Naive thymus-derived CD4-positive, alpha-beta T cell (primary cell): ENCODE measurements at regions of chr3 and their contacts with region 1.

Region 1: DNA sequence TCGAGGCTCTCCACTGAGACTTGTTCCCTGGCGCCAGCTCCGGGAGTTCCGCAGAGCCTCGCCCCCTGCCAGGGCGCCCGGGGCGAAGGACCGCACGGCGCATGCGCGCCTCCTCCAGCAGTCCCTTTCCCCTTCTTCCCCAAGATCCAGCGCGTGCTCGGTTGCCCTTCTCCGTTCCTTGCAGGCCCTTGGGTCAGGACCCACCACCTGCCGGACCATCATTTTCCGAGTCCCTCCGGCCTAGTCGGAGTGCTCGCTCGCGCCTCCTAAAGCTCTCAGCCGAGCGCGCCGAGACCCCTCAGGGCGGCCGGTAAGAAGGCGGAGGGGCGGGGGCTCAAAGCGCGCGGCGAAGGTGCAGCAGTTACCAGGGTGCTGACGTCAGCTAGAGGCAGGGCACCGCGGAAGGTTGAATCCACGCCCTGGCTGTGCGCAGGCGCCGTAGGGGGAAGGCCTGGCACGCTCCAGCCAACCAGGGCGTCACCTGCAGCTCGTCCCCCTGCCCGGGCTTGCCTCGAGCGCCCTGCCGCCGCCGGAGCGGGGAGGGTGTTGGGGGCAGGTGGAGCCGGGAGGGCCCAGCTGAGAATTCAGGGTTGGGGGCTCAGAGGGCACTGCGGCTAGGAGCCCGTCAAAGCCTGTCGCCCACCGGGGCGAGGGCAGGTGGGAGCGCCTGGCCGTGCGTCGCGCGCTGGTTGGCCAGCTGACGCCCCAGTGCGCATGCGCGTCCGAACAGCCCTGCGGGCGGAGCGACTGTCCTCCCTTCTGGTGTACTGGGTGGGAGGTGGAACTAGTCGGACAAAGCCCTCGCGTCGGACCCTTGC is at the start of gene TCAIM:
- DNase-seq: peak; percentile 97 to 100 (median 100)
- ATAC-seq: peak; percentile 97
- H3K4me3 ChIP-seq: peak within 1 kb of the TSS; percentile 91
- H3K4me3 Mint-ChIP-seq: peak within 1 kb of the TSS; percentile 92 to 99 (median 96)
- H3K27ac ChIP-seq: peak within 1 kb of the TSS; percentile 89
- H3K27ac Mint-ChIP-seq: peak within 1 kb of the TSS; percentile 87 to 99 (median 97)
- H3K4me1 ChIP-seq: peaks cover 14 to 16% of the 10 kb centered on the region in 2 donors
- H3K4me1 Mint-ChIP-seq: peaks cover 12 to 45% (median 34%) of the 10 kb centered on the region in 7 donors
- H3K27me3 ChIP-seq: no peaks in the 10 kb centered on the region
- H3K27me3 Mint-ChIP-seq: peaks cover 5 to 14% (median 7%) of the 10 kb centered on the region in 5 donors
- total RNA-seq, gene TCAIM: 7.7 to 19.8 (median 16.1) TPM

Region 2: GRCh38 chr3:42600111-42600988 is 1737.9 kb before region 1 on chr3 and contains the start of gene NKTR:
- CTCF ChIA-PET with region 1: no interaction called
- POLR2A ChIA-PET with region 1: no interaction called
- intact Hi-C with region 1: loop called in 1 of 2 experiments (anchors 10 kb)
- DNase-seq: peak; percentile 98 to 100 (median 100)
- ATAC-seq: peak; percentile 97
- H3K4me3 ChIP-seq: peak within 1 kb of the TSS; percentile 75
- H3K4me3 Mint-ChIP-seq: peak within 1 kb of the TSS; percentile 91 to 98 (median 95)
- H3K27ac ChIP-seq: peak within 1 kb of the TSS; percentile 93
- H3K27ac Mint-ChIP-seq: peak within 1 kb of the TSS; percentile 95 to 99 (median 98)
- H3K4me1 ChIP-seq: peaks cover 11 to 25% of the 10 kb centered on the region in 2 donors
- H3K4me1 Mint-ChIP-seq: peaks cover 26 to 53% (median 43%) of the 10 kb centered on the region in 7 donors
- H3K27me3 ChIP-seq: no peaks in the 10 kb centered on the region
- H3K27me3 Mint-ChIP-seq: peaks cover 0 to 2% (median 0%) of the 10 kb centered on the region in 5 donors
- total RNA-seq, gene NKTR: 110 to 275 (median 238) TPM

Region 3: GRCh38 chr3:43690400-43691119 is 647.7 kb before region 1 on chr3 and contains the start of gene ABHD5:
- CTCF ChIA-PET with region 1: no interaction called
- POLR2A ChIA-PET with region 1: no interaction called
- intact Hi-C with region 1: loop called (anchors 2 to 5 kb)
- DNase-seq: peak; percentile 94 to 99 (median 96)
- ATAC-seq: peak; percentile 96
- H3K4me3 ChIP-seq: peak within 1 kb of the TSS; percentile 74
- H3K4me3 Mint-ChIP-seq: peak within 1 kb of the TSS; percentile 91 to 98 (median 94)
- H3K27ac ChIP-seq: peak within 1 kb of the TSS; percentile 85
- H3K27ac Mint-ChIP-seq: peak within 1 kb of the TSS; percentile 90 to 97 (median 92)
- H3K4me1 ChIP-seq: peaks cover 8% of the 10 kb centered on the region in 2 donors
- H3K4me1 Mint-ChIP-seq: peaks cover 11 to 47% (median 37%) of the 10 kb centered on the region in 7 donors
- H3K27me3 ChIP-seq: no peaks in the 10 kb centered on the region
- H3K27me3 Mint-ChIP-seq: peaks cover 0 to 6% (median 0%) of the 10 kb centered on the region in 5 donors
- total RNA-seq, gene ABHD5: 6.1 to 21.0 (median 12.1) TPM

Region 4: GRCh38 chr3:44477312-44478030 is 139.3 kb after region 1 on chr3 and contains the start of gene ZNF445:
- CTCF ChIA-PET with region 1: no interaction called
- POLR2A ChIA-PET with region 1: interaction called, 5 read pairs
- intact Hi-C with region 1: loop called (anchors 1 kb)
- DNase-seq: peak; percentile 66 to 85 (median 79)
- ATAC-seq: peak; percentile 96
- H3K4me3 ChIP-seq: peak within 1 kb of the TSS; percentile 91
- H3K4me3 Mint-ChIP-seq: peak within 1 kb of the TSS; percentile 85 to 98 (median 92)
- H3K27ac ChIP-seq: peak within 1 kb of the TSS; percentile 70
- H3K27ac Mint-ChIP-seq: peak within 1 kb of the TSS; percentile 79 to 95 (median 87)
- H3K4me1 ChIP-seq: peaks cover 4 to 18% of the 10 kb centered on the region in 2 donors
- H3K4me1 Mint-ChIP-seq: peaks cover 16 to 51% (median 40%) of the 10 kb centered on the region in 7 donors
- H3K27me3 ChIP-seq: no peaks in the 10 kb centered on the region
- H3K27me3 Mint-ChIP-seq: no peaks in the 10 kb centered on the region
- total RNA-seq, gene ZNF445: 16.8 to 37.6 (median 24.4) TPM

Region 5: GRCh38 chr3:44624749-44625480 is 286.7 kb after region 1 on chr3 and contains the start of gene ZNF197:
- CTCF ChIA-PET with region 1: no interaction called
- POLR2A ChIA-PET with region 1: interaction called, 3 read pairs
- intact Hi-C with region 1: loop called in 1 of 2 experiments (anchors 5 kb)
- DNase-seq: peak; percentile 5 to 64 (median 27)
- ATAC-seq: peak; percentile 80
- H3K4me3 ChIP-seq: peak within 1 kb of the TSS; percentile 51
- H3K4me3 Mint-ChIP-seq: peak within 1 kb of the TSS; percentile 83 to 94 (median 92)
- H3K27ac ChIP-seq: peak within 1 kb of the TSS; percentile 66
- H3K27ac Mint-ChIP-seq: peak within 1 kb of the TSS; percentile 60 to 88 (median 81)
- H3K4me1 ChIP-seq: peaks cover 9 to 10% of the 10 kb centered on the region in 2 donors
- H3K4me1 Mint-ChIP-seq: peaks cover 18 to 53% (median 47%) of the 10 kb centered on the region in 7 donors
- H3K27me3 ChIP-seq: no peaks in the 10 kb centered on the region
- H3K27me3 Mint-ChIP-seq: no peaks in the 10 kb centered on the region
- total RNA-seq, gene ZNF197: 5.5 to 15.6 (median 15.0) TPM

Region 6: GRCh38 chr3:44642337-44642736 is 304.1 kb after region 1 on chr3:
- CTCF ChIA-PET with region 1: no interaction called
- POLR2A ChIA-PET with region 1: no interaction called
- intact Hi-C with region 1: no loop called
- DNase-seq: no peak
- ATAC-seq: no peak
- H3K4me3 ChIP-seq: peak overlapping the region; percentile 2
- H3K4me3 Mint-ChIP-seq: no peak overlapping the region
- H3K27ac ChIP-seq: no peak overlapping the region
- H3K27ac Mint-ChIP-seq: no peak overlapping the region
- H3K4me1 ChIP-seq: no peaks in the 10 kb centered on the region
- H3K4me1 Mint-ChIP-seq: peaks cover 0 to 14% (median 4%) of the 10 kb centered on the region in 7 donors
- H3K27me3 ChIP-seq: no peaks in the 10 kb centered on the region
- H3K27me3 Mint-ChIP-seq: no peaks in the 10 kb centered on the region

Region 7: DNA sequence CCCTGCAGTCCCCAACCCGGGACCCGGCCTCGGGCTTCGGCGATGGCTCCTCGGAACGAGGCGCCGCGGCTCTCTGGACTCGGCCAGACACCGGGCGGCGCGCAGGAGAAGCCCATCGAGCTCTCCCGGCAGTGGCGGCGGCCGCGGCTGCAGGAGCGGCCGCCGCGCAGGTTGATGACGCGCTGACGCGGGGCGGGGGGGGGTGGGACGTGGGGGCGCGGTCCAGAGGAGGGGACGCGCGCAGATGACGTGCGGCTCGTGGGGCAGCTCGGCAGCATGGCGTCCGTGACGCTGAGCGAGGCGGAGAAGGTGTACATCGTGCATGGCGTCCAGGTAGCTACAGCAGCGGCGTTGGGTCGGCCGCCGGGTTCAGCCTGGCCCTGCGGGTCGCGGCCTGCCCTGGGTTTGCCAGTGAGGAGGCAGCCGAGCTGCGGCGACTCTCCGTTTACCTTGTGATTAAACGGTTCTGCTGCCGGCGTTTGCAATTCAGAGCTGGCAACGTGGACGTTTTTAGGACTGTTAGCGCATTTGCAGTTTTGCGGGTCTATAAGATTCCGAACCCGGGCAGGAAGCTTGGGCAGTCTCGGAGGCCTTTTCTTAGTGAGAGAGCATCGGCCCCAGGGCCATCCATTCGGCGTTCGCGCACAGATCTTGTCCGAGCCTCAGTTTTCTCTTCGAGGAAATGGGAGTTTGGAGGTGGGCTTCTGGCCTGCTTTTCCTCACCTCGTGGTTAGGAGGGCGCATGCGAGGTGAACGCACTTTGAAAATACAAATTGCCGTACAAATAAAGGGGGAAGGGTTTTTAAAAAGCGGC is 638.0 kb after region 1 on chr3 and contains the starts of genes EXOSC7 and ZDHHC3:
- CTCF ChIA-PET with region 1: no interaction called
- POLR2A ChIA-PET with region 1: interaction called, 4 read pairs
- intact Hi-C with region 1: loop called (anchors 1 to 5 kb)
- DNase-seq: peak; percentile 73 to 89 (median 85)
- ATAC-seq: peak; percentile 98
- H3K4me3 ChIP-seq: peak within 1 kb of the TSS; percentile 94
- H3K4me3 Mint-ChIP-seq: peak within 1 kb of the TSS; percentile 90 to 97 (median 94)
- H3K27ac ChIP-seq: peak within 1 kb of the TSS; percentile 98
- H3K27ac Mint-ChIP-seq: peak within 1 kb of the TSS; percentile 85 to 97 (median 94)
- H3K4me1 ChIP-seq: peaks cover 21 to 37% of the 10 kb centered on the region in 2 donors
- H3K4me1 Mint-ChIP-seq: peaks cover 50 to 87% (median 79%) of the 10 kb centered on the region in 7 donors
- H3K27me3 ChIP-seq: no peaks in the 10 kb centered on the region
- H3K27me3 Mint-ChIP-seq: no peaks in the 10 kb centered on the region
- total RNA-seq, gene EXOSC7: 30.7 to 57.9 (median 44.3) TPM
- total RNA-seq, gene ZDHHC3: 38.5 to 54.0 (median 48.8) TPM